Spleen (tissue), 13 donors: ENCODE measurements at regions of chr4 and their contacts with region 1.

Region 1: DNA sequence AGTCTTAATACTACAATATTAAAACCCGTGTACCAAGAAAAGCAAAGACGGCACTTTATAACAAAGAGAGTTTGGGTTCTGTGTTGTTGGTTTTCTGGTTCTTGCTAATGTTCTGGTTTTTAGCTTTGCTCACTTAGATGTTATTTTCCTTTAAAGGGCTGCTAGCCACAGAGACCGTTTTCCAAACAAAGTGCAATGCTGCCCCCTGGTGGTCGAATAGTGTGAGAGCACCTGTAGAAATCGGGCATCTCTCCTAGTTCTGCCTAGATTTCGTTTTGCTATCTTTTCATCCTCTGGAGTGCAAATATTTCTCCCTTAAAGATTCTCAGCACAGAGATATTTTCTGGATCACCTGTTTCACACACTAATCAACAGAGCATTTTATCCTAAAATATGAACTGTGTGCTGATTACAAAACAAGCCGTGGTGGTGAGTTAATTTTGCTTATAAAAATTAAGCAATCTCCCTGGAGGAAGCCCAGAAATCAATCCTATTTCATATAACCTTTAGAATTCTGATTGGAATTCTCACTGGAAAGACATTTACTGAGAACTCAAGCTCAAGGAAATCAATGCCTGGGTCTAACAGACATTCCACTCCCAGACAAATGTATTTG is 334.5 kb upstream of the NOCT start:
- DNase-seq: peak; percentile 89
- H3K4me3 ChIP-seq: no peak overlapping the region
- H3K27ac ChIP-seq: no peak overlapping the region
- H3K4me1 ChIP-seq: peaks cover 0 to 5% (median 0%) of the 10 kb centered on the region in 6 donors
- H3K27me3 ChIP-seq: peaks cover 0 to 18% (median 0%) of the 10 kb centered on the region in 7 donors
- CTCF ChIP-seq: peak; percentile 63 to 94 (median 87)
- POLR2A ChIP-seq: no peak

Region 2: GRCh38 chr4:138035781-138036258 is 645.3 kb before region 1 on chr4:
- intact Hi-C with region 1: loop called (anchors 10 kb)
- DNase-seq: no peak
- H3K4me3 ChIP-seq: no peak overlapping the region
- H3K27ac ChIP-seq: no peak overlapping the region
- H3K4me1 ChIP-seq: peaks cover 0 to 6% (median 0%) of the 10 kb centered on the region in 6 donors
- H3K27me3 ChIP-seq: no peaks in the 10 kb centered on the region
- CTCF ChIP-seq: peak in 10 of 11 experiments; percentile 29 to 70 (median 52)
- POLR2A ChIP-seq: no peak